Ascending aorta (tissue), 2 donors: ENCODE measurements at regions of chr15 and their contacts with region 1.

Region 1: GRCh38 chr15:88246666-88247446 is 9.7 kb downstream of the NTRK3 start:
- DNase-seq: peak in 1 of 2 donors; percentile 88
- H3K4me3 ChIP-seq: peak overlapping the region in 1 of 2 donors; percentile 37
- H3K27ac ChIP-seq: peak overlapping the region; percentile 72 to 82
- H3K4me1 ChIP-seq: peaks cover 24 to 41% of the 10 kb centered on the region in 2 donors
- H3K27me3 ChIP-seq: no peaks in the 10 kb centered on the region
- CTCF ChIP-seq: peak; percentile 87 to 99 (median 97)

Region 2: GRCh38 chr15:87902772-87903426 is 344.0 kb before region 1 on chr15:
- intact Hi-C with region 1: loop called (anchors 2 kb)
- DNase-seq: peak; percentile 41 to 89
- H3K4me3 ChIP-seq: peak overlapping the region in 1 of 2 donors; percentile 40
- H3K27ac ChIP-seq: peak overlapping the region; percentile 82 to 88
- H3K4me1 ChIP-seq: peaks cover 0 to 6% of the 10 kb centered on the region in 2 donors
- H3K27me3 ChIP-seq: no peaks in the 10 kb centered on the region
- CTCF ChIP-seq: peak in 1 of 3 experiments; percentile 38

Region 3: DNA sequence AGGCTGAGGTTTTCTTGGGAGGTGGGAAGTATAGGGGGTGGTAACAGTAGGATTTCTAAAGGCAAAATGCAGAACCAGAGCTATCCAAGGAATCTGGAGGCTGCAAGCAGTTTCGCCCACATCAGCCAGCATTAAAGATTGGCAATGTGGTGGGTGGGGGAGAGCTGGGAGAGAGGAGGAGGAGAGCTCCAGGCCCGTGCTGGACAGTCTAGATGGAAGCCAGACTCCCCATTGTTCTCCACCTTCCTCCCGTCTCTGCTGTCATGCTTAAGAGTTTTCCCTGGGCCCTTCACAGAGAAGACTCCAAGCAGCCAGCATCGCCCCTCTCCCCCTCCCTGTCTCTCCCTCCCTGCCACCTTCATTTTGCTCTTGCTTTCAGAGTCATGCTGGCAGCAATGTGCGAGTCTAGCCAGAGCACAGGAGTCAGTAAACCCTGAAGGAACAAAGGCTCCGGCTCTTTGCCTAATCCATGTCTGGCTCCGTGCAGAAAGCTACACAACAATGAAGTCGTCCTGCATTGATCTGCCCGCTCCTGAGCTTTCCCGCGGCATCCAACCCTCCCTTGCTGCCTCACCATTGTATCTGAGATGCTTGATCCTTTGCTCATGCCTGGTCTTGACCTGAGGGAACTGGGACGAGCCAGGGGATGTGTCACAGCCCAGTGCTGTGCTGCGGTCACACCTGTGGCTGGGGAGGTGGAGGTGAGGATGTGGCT is 273.2 kb before region 1 on chr15:
- intact Hi-C with region 1: loop called (anchors 10 kb)
- DNase-seq: peak in 1 of 2 donors; percentile 61
- H3K4me3 ChIP-seq: no peak overlapping the region
- H3K27ac ChIP-seq: peak overlapping the region; percentile 25 to 69
- H3K4me1 ChIP-seq: peaks cover 6 to 33% of the 10 kb centered on the region in 2 donors
- H3K27me3 ChIP-seq: no peaks in the 10 kb centered on the region
- CTCF ChIP-seq: no peak

Region 4: GRCh38 chr15:88018856-88019641 is 227.8 kb before region 1 on chr15:
- intact Hi-C with region 1: loop called (anchors 5 kb)
- DNase-seq: no peak
- H3K4me3 ChIP-seq: no peak overlapping the region
- H3K27ac ChIP-seq: no peak overlapping the region
- H3K4me1 ChIP-seq: peaks cover 4 to 15% of the 10 kb centered on the region in 2 donors
- H3K27me3 ChIP-seq: no peaks in the 10 kb centered on the region
- CTCF ChIP-seq: no peak

Region 5: DNA sequence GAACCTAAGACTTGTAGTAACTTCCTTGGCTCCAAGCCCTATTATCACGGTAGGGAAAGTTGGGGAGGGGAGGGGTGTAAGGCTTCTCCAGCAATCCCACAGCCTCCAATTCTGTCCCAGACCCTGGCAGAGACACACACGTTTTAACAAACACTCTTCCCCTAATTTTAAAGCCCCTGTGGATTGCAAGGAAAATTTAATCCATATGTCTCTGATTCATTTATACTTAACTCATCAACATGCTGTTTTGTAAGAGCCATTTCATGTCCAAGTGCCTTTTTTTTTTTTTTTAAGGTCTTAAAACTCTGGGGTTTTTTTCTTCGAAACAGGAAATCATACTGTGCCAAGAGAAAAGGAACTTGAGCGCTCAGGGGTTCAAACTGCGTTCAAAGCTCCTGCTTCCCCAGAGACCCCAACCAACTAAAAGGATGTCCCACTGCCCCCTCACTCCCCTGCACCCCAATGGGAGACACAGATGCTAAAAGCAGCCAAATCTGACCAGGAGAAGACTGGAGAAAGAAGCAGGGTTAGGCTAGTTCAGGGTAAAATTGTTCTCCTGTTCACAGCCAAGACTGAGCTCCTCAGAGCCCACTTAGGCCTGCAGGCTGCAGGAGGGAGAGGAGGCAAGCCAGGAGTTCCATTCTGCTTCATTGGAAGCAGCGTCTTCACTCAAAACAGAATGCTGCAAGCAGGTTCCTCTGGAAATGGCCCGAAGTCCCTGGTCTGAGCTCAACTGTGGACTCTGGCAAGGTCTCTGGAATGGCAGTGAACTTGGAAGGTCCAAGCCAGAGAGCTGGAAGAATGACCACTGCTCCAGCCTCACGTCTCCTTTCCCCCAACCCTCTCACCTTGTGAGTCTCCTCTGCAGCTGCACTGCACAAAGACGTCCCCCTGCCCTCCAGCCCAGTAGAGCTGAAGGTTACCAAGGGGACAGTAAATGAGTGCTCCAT is 162.8 kb before region 1 on chr15:
- intact Hi-C with region 1: loop called (anchors 5 kb)
- DNase-seq: no peak
- H3K4me3 ChIP-seq: peak overlapping the region in 1 of 2 donors; percentile 22
- H3K27ac ChIP-seq: peak overlapping the region; percentile 79 to 89
- H3K4me1 ChIP-seq: peaks cover 12 to 46% of the 10 kb centered on the region in 2 donors
- H3K27me3 ChIP-seq: no peaks in the 10 kb centered on the region
- CTCF ChIP-seq: no peak

Region 6: DNA sequence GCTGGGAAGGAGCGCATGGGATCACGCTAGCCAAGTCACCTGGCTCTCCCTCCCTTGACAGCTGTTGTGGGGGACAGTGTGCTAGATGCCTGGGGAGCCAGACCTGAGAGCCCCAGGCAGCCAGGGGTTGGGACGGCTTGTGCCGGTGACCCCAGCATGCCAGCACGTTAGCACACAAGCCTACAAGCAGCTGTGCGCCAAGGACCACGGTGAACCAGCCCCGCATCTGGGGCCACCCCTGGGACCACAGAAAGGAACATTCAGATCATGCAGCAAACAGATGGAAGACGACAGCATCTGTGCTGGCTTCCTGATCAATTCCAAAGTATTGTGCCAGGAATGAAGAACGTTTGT is 55.1 kb before region 1 on chr15:
- intact Hi-C with region 1: loop called (anchors 2 kb)
- DNase-seq: no peak
- H3K4me3 ChIP-seq: no peak overlapping the region
- H3K27ac ChIP-seq: no peak overlapping the region
- H3K4me1 ChIP-seq: peaks cover 3 to 23% of the 10 kb centered on the region in 2 donors
- H3K27me3 ChIP-seq: no peaks in the 10 kb centered on the region
- CTCF ChIP-seq: no peak

Region 7: DNA sequence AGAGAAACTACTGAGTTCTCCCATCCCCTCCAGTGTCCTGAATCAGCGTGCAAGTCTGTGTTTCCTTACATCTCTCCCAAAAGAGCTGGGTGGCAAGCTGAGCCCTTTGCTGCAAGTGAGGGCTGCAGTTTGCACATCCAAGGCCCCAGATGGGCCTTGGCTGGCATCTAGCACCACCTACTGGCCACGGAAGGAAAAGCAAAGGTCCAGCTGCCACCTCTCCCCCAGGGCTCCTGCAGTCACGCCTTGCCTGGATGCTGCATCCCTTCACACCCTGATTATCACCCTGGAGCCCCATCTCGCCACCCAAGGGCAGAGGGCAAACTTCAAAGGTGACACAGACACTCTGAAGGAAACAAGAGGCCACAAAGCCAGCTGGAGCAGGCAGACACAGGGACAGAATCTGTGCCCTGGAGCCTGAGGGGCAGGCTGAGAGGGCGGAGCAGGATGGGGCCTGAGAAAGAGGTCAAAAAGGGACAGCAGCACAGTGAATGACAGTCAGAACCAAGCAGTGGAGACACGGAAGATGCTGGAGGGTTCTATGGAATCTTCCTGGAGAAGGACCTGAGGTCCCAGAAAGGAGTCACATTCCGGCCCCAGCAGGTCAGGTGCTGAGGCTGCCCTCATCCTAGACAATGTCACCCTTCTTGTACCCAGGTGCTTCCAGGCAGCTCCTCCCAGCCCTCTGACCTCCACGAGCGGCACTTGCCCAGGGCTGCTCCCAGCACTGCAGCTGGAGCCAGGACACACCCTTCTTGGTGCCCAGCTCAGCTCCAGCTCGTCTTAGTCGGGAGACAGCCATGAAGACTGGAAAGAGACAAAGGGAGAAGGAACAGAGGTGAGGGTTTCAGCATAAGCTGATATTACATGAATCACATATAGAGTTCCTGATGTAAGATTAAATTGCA is 28.0 kb after region 1 on chr15:
- intact Hi-C with region 1: no loop called
- DNase-seq: peak in 1 of 2 donors; percentile 79
- H3K4me3 ChIP-seq: no peak overlapping the region
- H3K27ac ChIP-seq: no peak overlapping the region
- H3K4me1 ChIP-seq: no peaks in the 10 kb centered on the region
- H3K27me3 ChIP-seq: no peaks in the 10 kb centered on the region
- CTCF ChIP-seq: peak; percentile 83 to 93 (median 86)

Region 8: GRCh38 chr15:89334510-89335288 is 1087.8 kb after region 1 on chr15 and contains the start of gene POLG:
- intact Hi-C with region 1: loop called (anchors 10 kb)
- DNase-seq: peak; percentile 96 to 99
- H3K4me3 ChIP-seq: peak within 1 kb of the TSS; percentile 76 to 96
- H3K27ac ChIP-seq: peak within 1 kb of the TSS; percentile 88 to 93
- H3K4me1 ChIP-seq: peaks cover 14 to 38% of the 10 kb centered on the region in 2 donors
- H3K27me3 ChIP-seq: no peaks in the 10 kb centered on the region
- CTCF ChIP-seq: no peak
- total RNA-seq, gene POLG: 69.1 TPM